ENCODE measurements at regions of chr4 and their contacts with region 1.

Region 1: GRCh38 chr4:41287050-41287449 is 30.3 kb downstream of the UCHL1 start:
- DNase-seq: peak; percentile 44 to 96
- H3K4me3 ChIP-seq: no peak overlapping the region
- H3K27ac ChIP-seq: peak overlapping the region; percentile 89
- H3K4me1 ChIP-seq: peaks cover 40% of the 10 kb centered on the region
- H3K27me3 ChIP-seq: no peaks in the 10 kb centered on the region
- CTCF ChIP-seq: no peak

Region 2: DNA sequence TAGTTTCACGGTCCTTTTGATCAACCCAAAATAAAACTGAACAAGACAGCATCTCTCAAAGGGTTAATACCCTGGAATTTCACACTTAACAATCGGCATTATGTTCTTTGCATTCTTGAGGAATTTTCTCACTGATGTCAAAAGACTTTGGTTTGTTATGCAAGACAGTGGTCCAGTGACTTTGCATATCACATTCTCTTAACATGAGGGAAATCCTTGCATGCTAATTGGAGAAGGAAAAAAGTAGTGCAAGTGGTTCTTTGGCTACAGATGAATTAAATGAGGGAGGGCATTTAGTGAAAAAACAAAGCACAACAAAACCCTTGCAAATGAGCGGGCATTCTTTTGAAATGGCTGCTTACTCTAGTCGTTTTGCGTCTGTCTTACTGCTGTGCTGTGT is 145.8 kb after region 1 on chr4:
- CTCF ChIA-PET with region 1: no interaction called
- POLR2A ChIA-PET with region 1: no interaction called
- intact Hi-C with region 1: loop called (anchors 2 kb)
- DNase-seq: peak; percentile 21 to 94
- H3K4me3 ChIP-seq: no peak overlapping the region
- H3K27ac ChIP-seq: peak overlapping the region; percentile 85
- H3K4me1 ChIP-seq: peaks cover 56% of the 10 kb centered on the region
- H3K27me3 ChIP-seq: no peaks in the 10 kb centered on the region
- CTCF ChIP-seq: no peak

Region 3: GRCh38 chr4:42083816-42084215 is 796.8 kb after region 1 on chr4:
- CTCF ChIA-PET with region 1: no interaction called
- POLR2A ChIA-PET with region 1: no interaction called
- intact Hi-C with region 1: no loop called
- DNase-seq: no peak
- H3K4me3 ChIP-seq: no peak overlapping the region
- H3K27ac ChIP-seq: no peak overlapping the region
- H3K4me1 ChIP-seq: no peaks in the 10 kb centered on the region
- H3K27me3 ChIP-seq: no peaks in the 10 kb centered on the region
- CTCF ChIP-seq: no peak